Natural killer cell (primary cell): ENCODE measurements at regions of chr16 and their contacts with region 1.

Region 1: GRCh38 chr16:53099318-53100130 is 44.7 kb downstream of the CHD9 start:
- DNase-seq: peak; percentile 39 to 75
- ATAC-seq: peak; percentile 60 to 79 (median 79)
- H3K4me3 ChIP-seq: peak overlapping the region; percentile 29
- H3K4me3 Mint-ChIP-seq: peak overlapping the region; percentile 86
- H3K27ac ChIP-seq: peak overlapping the region; percentile 72
- H3K27ac Mint-ChIP-seq: peak overlapping the region; percentile 84 to 96
- H3K4me1 ChIP-seq: peaks cover 35% of the 10 kb centered on the region
- H3K4me1 Mint-ChIP-seq: peaks cover 16 to 35% of the 10 kb centered on the region in 2 donors
- H3K27me3 ChIP-seq: no peaks in the 10 kb centered on the region
- H3K27me3 Mint-ChIP-seq: no peaks in the 10 kb centered on the region
- CTCF ChIP-seq: no peak

Region 2: DNA sequence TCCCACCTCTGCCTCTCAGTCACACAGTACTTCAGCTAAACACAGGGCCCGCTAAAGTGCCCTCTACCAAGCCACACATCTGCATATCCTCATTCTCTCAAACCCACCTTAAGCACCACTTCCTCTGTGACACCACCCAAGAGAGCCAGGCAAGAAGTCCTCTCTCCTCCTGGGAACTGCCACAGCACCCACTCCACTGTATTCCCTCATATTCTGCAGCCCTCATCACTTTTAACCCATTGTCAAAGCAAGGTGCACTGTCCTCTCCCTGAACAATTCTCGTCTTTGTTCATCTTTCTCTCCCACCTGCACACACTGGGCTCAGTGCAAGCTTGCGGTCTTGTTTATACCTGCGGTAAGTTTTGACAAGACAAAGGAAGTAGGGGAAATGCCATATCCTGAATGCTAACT is 31.1 kb before region 1 on chr16:
- intact Hi-C with region 1: loop called (anchors 1 kb)
- DNase-seq: peak in 1 of 2 donors; percentile 43
- ATAC-seq: peak; percentile 60 to 79 (median 61)
- H3K4me3 ChIP-seq: no peak overlapping the region
- H3K4me3 Mint-ChIP-seq: peak overlapping the region; percentile 80
- H3K27ac ChIP-seq: peak overlapping the region; percentile 44
- H3K27ac Mint-ChIP-seq: peak overlapping the region; percentile 39 to 85
- H3K4me1 ChIP-seq: peaks cover 68% of the 10 kb centered on the region
- H3K4me1 Mint-ChIP-seq: peaks cover 65 to 86% of the 10 kb centered on the region in 2 donors
- H3K27me3 ChIP-seq: no peaks in the 10 kb centered on the region
- H3K27me3 Mint-ChIP-seq: no peaks in the 10 kb centered on the region
- CTCF ChIP-seq: no peak